Gastrocnemius medialis (tissue), 4 donors: ENCODE measurements at regions of chr9 and their contacts with region 1.

Region 1: GRCh38 chr9:85940832-85941621 is at the start of gene NAA35:
- DNase-seq: peak; percentile 97 to 98
- ATAC-seq: peak; percentile 93 to 94
- H3K4me3 ChIP-seq: peak within 1 kb of the TSS; percentile 92 to 97 (median 94)
- H3K27ac ChIP-seq: peak within 1 kb of the TSS; percentile 92 to 98 (median 97)
- H3K4me1 ChIP-seq: peaks cover 34 to 42% of the 10 kb centered on the region in 2 donors
- H3K27me3 ChIP-seq: no peaks in the 10 kb centered on the region
- CTCF ChIP-seq: no peak
- POLR2A ChIP-seq: peak; percentile 60 to 67
- total RNA-seq, gene NAA35: 22.7 to 26.9 (median 24.5) TPM

Region 2: DNA sequence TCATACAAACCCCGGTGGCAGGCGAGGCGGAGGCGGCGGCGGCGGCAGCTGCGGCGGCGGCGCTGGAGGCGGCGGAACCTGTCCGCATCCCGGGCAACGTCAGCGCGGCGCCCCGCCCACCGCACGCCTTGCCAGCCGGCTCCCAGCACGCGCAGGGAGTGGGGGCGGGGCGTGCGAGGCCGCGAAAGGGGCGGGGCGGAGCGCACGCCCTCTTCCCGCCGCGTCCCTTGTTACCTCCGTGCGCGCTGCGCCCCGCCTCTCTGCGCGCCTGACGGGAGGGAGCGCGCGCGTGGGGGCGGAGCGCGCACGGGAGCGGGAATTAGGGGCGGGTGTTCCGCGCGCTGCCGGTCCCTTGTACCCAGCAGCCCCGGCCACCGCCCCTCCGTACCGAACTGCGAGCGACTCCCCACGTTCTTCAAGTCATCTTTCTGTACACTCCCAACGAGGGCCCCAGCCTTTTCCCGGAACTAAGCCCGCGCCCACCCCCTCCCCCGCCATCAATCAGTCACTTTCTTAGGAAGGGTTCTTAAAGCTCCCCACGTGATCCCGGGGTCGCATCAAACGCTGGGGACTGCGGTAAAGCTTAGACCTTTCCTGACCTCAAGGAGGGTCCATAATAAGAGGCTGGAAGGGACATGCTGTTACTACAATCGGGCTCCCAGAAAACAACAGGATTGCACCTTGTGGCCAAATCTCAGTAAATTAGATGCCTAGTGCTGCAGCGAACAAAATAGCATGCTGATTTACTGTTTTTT is 199.0 kb before region 1 on chr9 and contains the start of gene AGTPBP1:
- in situ Hi-C with region 1: no loop called
- intact Hi-C with region 1: loop called (anchors 1 kb)
- DNase-seq: peak; percentile 86 to 92
- ATAC-seq: peak; percentile 87 to 91
- H3K4me3 ChIP-seq: peak within 1 kb of the TSS; percentile 76 to 91 (median 83)
- H3K27ac ChIP-seq: peak within 1 kb of the TSS; percentile 85 to 91 (median 88)
- H3K4me1 ChIP-seq: peaks cover 23 to 35% of the 10 kb centered on the region in 2 donors
- H3K27me3 ChIP-seq: no peaks in the 10 kb centered on the region
- CTCF ChIP-seq: peak in 1 of 5 experiments; percentile 36
- POLR2A ChIP-seq: peak; percentile 77 to 85
- total RNA-seq, gene AGTPBP1: 24.4 to 39.7 (median 31.8) TPM

Region 3: DNA sequence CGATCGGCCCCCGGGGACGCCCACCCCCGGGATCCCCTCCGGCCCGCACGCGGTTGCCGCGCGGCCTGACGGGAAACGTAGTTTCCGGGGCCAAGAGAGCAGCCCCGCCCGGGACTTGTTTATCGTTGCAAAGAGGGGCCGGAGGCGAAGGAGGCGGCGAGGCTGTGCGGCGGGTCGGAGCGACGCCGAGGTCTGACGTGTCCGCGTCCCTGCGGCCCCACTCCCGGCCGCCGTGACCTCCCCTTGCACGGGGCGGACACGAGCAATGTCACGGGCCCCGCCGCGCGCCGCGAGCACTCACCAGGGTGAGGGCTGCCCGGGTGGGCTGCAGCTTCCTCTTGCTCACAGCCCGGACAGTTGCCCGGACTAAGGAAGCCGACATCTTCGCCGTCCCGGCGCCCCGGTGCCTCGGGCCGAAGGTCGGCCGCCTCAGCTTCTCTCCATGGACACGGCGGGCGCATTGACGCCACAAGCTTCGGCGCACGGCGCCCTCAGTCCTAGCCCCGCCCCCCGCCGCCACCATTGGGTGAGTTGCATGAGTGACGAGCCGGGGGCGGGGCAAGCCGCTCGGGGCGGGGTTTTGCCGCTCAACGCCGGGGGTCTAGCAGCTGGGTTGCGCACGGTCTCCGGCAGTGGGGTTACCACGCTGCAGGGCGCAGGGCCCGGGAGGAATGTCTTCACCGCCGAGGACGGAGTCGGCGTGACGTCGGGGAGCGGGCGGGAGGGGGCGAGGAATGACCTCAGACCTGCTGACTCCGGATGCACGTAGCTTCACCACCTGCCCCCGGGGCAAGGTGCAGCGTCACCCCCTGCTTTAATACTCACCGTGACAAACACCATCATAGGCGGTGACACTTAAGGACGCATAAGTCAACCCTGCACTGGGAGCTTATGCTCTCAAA is 341.3 kb after region 1 on chr9 and contains the start of gene ISCA1:
- in situ Hi-C with region 1: loop called in 1 of 4 experiments (anchors 25 kb)
- intact Hi-C with region 1: loop called (anchors 1 kb)
- DNase-seq: peak; percentile 93 to 96
- ATAC-seq: peak; percentile 88 to 89
- H3K4me3 ChIP-seq: peak within 1 kb of the TSS; percentile 87 to 98 (median 94)
- H3K27ac ChIP-seq: peak within 1 kb of the TSS; percentile 95 to 99 (median 97)
- H3K4me1 ChIP-seq: peaks cover 38 to 44% of the 10 kb centered on the region in 2 donors
- H3K27me3 ChIP-seq: no peaks in the 10 kb centered on the region
- CTCF ChIP-seq: peak in 1 of 5 experiments; percentile 11
- POLR2A ChIP-seq: peak; percentile 84 to 94
- total RNA-seq, gene ISCA1: 59.8 to 115 (median 89.9) TPM

Region 4: DNA sequence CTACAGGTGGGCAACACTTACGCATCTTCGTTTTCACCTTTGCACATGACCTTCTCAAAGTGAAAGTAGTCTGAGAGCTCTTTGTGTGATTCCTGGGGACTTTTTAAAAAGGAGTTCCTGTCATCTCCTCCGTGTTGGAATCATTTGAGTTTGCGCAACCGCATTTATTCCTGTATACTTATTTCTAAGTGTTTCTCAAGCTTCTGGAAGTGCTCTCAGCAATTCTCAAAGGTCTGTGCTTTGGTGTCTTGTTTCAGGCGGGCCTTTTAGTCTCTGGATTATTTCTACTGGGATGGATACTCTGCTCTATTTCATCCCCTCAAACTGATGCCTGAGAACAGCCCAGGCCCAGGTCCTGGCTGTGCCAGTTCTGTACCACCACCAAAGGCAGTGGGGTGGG is 639.7 kb after region 1 on chr9:
- in situ Hi-C with region 1: no loop called
- intact Hi-C with region 1: no loop called
- DNase-seq: peak; percentile 33 to 34
- ATAC-seq: peak; percentile 39 to 46
- H3K4me3 ChIP-seq: no peak overlapping the region
- H3K27ac ChIP-seq: peak overlapping the region in 3 of 4 donors; percentile 17 to 54 (median 36)
- H3K4me1 ChIP-seq: peaks cover 0 to 3% of the 10 kb centered on the region in 2 donors
- H3K27me3 ChIP-seq: no peaks in the 10 kb centered on the region
- CTCF ChIP-seq: no peak
- POLR2A ChIP-seq: no peak